ENCODE measurements at regions of chr6 and their contacts with region 1.

Region 1: GRCh38 chr6:112946051-112946450 is 598.9 kb downstream of the RFPL4B start:
- DNase-seq: no peak
- ATAC-seq: no peak
- H3K4me3 ChIP-seq: no peak overlapping the region
- H3K27ac ChIP-seq: no peak overlapping the region
- H3K4me1 ChIP-seq: no peaks in the 10 kb centered on the region
- H3K27me3 ChIP-seq: no peaks in the 10 kb centered on the region
- CTCF ChIP-seq: no peak
- EP300 ChIP-seq: no peak
- POLR2A ChIP-seq: no peak
- RAD21 ChIP-seq: no peak

Region 2: GRCh38 chr6:112979830-112980229 is 33.8 kb after region 1 on chr6:
- CTCF ChIA-PET with region 1: no interaction called
- POLR2A ChIA-PET with region 1: no interaction called
- in situ Hi-C with region 1: no loop called
- intact Hi-C with region 1: loop called (anchors 1 kb)
- DNase-seq: no peak
- ATAC-seq: no peak
- H3K4me3 ChIP-seq: no peak overlapping the region
- H3K27ac ChIP-seq: no peak overlapping the region
- H3K4me1 ChIP-seq: no peaks in the 10 kb centered on the region
- H3K27me3 ChIP-seq: no peaks in the 10 kb centered on the region
- CTCF ChIP-seq: no peak
- EP300 ChIP-seq: no peak
- POLR2A ChIP-seq: no peak
- RAD21 ChIP-seq: no peak

Region 3: DNA sequence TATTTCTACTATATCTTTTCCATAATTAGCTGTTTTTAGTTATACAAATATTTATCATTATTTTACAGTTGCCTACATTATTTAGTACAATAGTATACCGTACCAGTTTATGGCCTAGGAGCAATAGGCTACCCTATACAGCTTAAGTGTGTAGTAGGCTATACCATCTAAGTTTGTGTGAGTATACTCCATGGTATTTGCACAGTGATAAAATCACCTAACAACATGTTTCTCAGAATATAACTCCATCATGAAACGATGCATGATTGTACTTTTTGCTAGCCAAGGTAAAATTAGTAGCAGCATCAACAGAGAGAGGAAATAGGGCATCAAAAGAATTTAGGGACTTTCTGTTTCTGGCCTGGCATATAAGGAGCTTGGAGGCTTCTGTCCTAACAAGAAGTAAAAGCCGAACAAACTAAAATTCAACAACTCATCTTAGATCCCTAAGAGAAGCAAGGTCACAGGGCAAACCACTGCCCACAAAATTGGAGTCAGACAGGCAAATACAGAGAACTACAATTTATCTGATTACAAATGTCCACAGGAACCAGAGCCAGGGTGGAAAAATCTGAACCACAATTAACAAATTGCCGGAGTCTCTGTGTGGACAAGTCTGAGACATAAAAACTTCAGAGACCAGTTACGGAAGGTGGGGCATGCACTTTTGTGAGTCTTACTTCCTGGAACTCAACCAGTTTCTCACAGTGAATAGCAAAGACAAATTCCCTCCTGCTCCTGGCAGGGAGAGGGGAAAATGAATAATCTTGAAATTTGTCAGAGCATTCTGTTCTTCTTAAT is 72.5 kb after region 1 on chr6:
- CTCF ChIA-PET with region 1: no interaction called
- POLR2A ChIA-PET with region 1: no interaction called
- in situ Hi-C with region 1: no loop called
- intact Hi-C with region 1: no loop called
- DNase-seq: no peak
- ATAC-seq: no peak
- H3K4me3 ChIP-seq: no peak overlapping the region
- H3K27ac ChIP-seq: no peak overlapping the region
- H3K4me1 ChIP-seq: no peaks in the 10 kb centered on the region
- H3K27me3 ChIP-seq: no peaks in the 10 kb centered on the region
- CTCF ChIP-seq: no peak
- EP300 ChIP-seq: no peak
- POLR2A ChIP-seq: no peak
- RAD21 ChIP-seq: no peak